Left ventricle myocardium superior (tissue), 1 donor: ENCODE measurements at regions of chr5 and their contacts with region 1.

Region 1: GRCh38 chr5:131186561-131187256 is 16.0 kb downstream of the LYRM7 start:
- DNase-seq: no peak
- ATAC-seq: no peak

Region 2: GRCh38 chr5:131252824-131253171 is 66.1 kb after region 1 on chr5:
- intact Hi-C with region 1: loop called (anchors 10 kb)
- DNase-seq: peak; percentile 50
- ATAC-seq: peak; percentile 80